ENCODE measurements at regions of chr4 and their contacts with region 1.

Region 1: GRCh38 chr4:161291222-161291621 is 872.6 kb downstream of the FSTL5 start:
- DNase-seq: no peak
- ATAC-seq: no peak
- H3K4me3 ChIP-seq: no peak overlapping the region
- H3K27ac ChIP-seq: no peak overlapping the region
- H3K4me1 ChIP-seq: no peaks in the 10 kb centered on the region
- H3K27me3 ChIP-seq: no peaks in the 10 kb centered on the region
- CTCF ChIP-seq: no peak

Region 2: DNA sequence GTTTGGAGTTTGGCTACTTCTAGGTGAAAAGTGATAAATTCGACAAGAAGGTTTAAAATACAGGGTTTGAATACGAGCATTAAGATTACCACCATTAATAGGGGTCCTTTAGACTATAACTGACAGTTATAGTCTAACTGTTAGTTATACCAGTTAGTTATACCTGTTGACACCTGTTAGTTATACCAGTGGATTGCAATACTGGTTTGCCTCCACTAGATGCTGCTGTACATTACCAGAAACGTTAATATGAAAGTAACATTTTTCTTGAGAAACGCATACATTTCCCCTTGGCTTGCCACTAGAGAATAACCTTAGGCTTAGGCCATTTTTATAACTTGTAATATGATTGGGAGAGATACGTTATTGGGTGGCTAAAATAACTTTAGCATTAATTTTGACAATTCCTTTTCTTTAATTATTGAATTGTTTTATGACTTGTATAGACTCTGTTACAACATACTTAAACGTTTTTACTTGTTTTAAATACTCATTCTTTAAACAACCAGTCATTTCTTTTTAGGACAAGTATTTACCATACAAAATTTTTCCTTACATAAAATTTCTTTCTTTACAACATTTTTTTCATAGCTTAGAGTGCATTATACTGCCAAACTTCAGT is 38.6 kb before region 1 on chr4:
- intact Hi-C with region 1: no loop called
- DNase-seq: no peak
- ATAC-seq: no peak
- H3K4me3 ChIP-seq: no peak overlapping the region
- H3K27ac ChIP-seq: no peak overlapping the region
- H3K4me1 ChIP-seq: no peaks in the 10 kb centered on the region
- H3K27me3 ChIP-seq: no peaks in the 10 kb centered on the region
- CTCF ChIP-seq: peak in 8 of 9 donors; percentile 20 to 61 (median 46)

Region 3: DNA sequence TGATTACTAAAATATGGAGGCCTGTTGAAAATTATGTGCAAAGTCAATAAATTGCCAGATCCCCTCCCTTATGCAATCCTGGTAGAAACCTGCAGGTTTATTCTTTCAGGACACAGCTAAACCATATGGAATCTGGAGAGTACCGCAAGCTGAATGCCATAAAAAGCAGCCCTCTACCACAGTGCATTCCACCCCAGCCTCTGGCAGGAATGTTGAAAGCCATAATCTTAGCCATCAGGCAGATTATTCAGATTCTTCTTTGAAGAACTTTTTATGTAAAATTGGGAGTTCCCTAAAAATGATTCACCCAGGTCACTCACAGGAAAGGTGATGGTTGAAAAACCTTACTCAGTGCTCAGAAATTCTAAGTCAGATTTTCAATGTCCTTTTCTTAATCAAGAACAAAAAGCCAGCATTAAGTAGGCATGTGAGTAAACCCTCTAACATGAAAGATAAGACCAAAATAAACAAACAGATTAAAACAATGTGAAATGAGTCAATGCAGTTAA is 645.5 kb after region 1 on chr4:
- intact Hi-C with region 1: loop called in 1 of 10 experiments (anchors 10 kb)
- DNase-seq: no peak
- ATAC-seq: no peak
- H3K4me3 ChIP-seq: no peak overlapping the region
- H3K27ac ChIP-seq: no peak overlapping the region
- H3K4me1 ChIP-seq: no peaks in the 10 kb centered on the region
- H3K27me3 ChIP-seq: no peaks in the 10 kb centered on the region
- CTCF ChIP-seq: no peak

Measured in heart right ventricle (tissue), 16 donors.